MCF 10A (cell line): ENCODE measurements at regions of chr13 and their contacts with region 1.

Region 1: GRCh38 chr13:44300895-44301638 is 72.6 kb upstream of the SERP2 start:
- DNase-seq: peak; percentile 98
- H3K4me3 Mint-ChIP-seq: peak overlapping the region; percentile 52
- H3K27ac Mint-ChIP-seq: peak overlapping the region; percentile 88
- H3K4me1 Mint-ChIP-seq: peaks cover 56% of the 10 kb centered on the region
- H3K27me3 Mint-ChIP-seq: no peaks in the 10 kb centered on the region
- CTCF ChIP-seq: peak; percentile 8

Region 2: GRCh38 chr13:44141725-44142539 is 159.1 kb before region 1 on chr13:
- CTCF ChIA-PET with region 1: no interaction called
- POLR2A ChIA-PET with region 1: interaction called, 12 read pairs
- intact Hi-C with region 1: no loop called
- DNase-seq: peak; percentile 97
- H3K4me3 Mint-ChIP-seq: peak overlapping the region; percentile 91
- H3K27ac Mint-ChIP-seq: peak overlapping the region; percentile 100
- H3K4me1 Mint-ChIP-seq: peaks cover 14% of the 10 kb centered on the region
- H3K27me3 Mint-ChIP-seq: no peaks in the 10 kb centered on the region
- CTCF ChIP-seq: no peak

Region 3: GRCh38 chr13:44267966-44268365 is 33.1 kb before region 1 on chr13:
- CTCF ChIA-PET with region 1: no interaction called
- POLR2A ChIA-PET with region 1: interaction called, 82 read pairs
- intact Hi-C with region 1: no loop called
- DNase-seq: peak; percentile 80
- H3K4me3 Mint-ChIP-seq: peak overlapping the region; percentile 50
- H3K27ac Mint-ChIP-seq: peak overlapping the region; percentile 97
- H3K4me1 Mint-ChIP-seq: peaks cover 57% of the 10 kb centered on the region
- H3K27me3 Mint-ChIP-seq: no peaks in the 10 kb centered on the region
- CTCF ChIP-seq: no peak

Region 4: DNA sequence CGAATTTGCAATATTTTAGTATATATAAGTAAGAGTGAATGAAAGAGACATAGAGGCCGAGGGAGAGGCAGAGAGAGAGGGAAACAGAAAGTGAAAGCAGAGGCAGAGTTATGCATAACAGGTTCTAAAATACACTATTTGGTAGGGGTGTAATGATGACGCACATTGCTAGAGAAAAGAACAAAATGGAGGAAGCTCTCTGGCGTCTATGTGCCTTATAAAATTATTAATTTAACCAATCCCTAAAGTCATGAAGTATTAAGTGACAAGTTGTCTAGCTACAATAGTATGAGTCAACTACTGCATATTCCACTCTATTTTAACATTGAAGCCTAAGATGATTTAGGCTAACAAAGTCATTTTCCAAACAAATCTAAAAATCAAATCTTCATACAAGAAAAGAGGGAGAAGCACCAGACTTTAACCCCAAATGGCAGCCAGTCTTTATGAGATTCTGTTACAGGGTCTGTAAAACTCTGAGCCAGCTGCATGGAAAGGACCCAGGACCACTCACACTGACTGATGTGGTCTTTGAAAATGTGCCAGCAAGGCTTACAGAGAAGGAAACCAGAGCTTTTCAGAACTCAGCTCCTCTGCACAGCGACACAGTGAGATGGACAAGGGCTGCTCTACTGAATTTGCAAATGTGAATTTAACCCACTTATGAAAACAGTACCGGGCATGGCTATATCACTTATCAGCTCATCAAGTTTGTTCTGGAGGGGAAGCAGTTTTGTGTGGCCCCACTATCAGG is 26.4 kb before region 1 on chr13:
- CTCF ChIA-PET with region 1: interaction called, 5 read pairs
- POLR2A ChIA-PET with region 1: interaction called, 82 read pairs
- intact Hi-C with region 1: no loop called
- DNase-seq: peak; percentile 66
- H3K4me3 Mint-ChIP-seq: peak overlapping the region; percentile 60
- H3K27ac Mint-ChIP-seq: peak overlapping the region; percentile 94
- H3K4me1 Mint-ChIP-seq: peaks cover 37% of the 10 kb centered on the region
- H3K27me3 Mint-ChIP-seq: no peaks in the 10 kb centered on the region
- CTCF ChIP-seq: no peak